Head of caudate nucleus (tissue), 42 donors: ENCODE measurements at regions of chr21 and their contacts with region 1.

Region 1: GRCh38 chr21:17387030-17387617 is 125.7 kb upstream of the CXADR start:
- DNase-seq: peak in 27 of 42 donors; percentile 14 to 87 (median 62)

Region 2: GRCh38 chr21:16342932-16343331 is 1044.2 kb before region 1 on chr21:
- intact Hi-C with region 1: no loop called
- DNase-seq: no peak

Region 3: DNA sequence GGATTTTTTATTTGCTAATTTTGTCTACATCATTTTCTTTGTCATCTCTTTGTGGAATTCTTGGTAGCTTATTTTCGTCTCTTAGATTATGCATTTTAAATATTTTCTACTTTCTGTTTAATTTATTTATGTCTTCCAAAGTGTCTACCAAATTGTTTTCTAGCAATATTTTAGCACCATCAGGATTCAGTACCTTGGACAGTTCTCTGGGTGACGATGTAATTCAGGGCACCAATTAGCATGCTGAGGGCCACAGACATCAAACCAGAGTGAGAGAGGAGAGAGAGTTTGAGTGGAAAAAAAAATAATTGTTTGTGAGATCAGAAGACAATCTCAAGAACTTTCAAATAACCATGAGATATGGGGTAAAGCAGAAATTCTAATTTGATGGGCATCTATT is 44.1 kb before region 1 on chr21:
- intact Hi-C with region 1: no loop called
- DNase-seq: no peak

Region 4: GRCh38 chr21:17441370-17441769 is 54.2 kb after region 1 on chr21:
- intact Hi-C with region 1: no loop called
- DNase-seq: peak in 12 of 42 donors; percentile 25 to 75 (median 48)

Region 5: DNA sequence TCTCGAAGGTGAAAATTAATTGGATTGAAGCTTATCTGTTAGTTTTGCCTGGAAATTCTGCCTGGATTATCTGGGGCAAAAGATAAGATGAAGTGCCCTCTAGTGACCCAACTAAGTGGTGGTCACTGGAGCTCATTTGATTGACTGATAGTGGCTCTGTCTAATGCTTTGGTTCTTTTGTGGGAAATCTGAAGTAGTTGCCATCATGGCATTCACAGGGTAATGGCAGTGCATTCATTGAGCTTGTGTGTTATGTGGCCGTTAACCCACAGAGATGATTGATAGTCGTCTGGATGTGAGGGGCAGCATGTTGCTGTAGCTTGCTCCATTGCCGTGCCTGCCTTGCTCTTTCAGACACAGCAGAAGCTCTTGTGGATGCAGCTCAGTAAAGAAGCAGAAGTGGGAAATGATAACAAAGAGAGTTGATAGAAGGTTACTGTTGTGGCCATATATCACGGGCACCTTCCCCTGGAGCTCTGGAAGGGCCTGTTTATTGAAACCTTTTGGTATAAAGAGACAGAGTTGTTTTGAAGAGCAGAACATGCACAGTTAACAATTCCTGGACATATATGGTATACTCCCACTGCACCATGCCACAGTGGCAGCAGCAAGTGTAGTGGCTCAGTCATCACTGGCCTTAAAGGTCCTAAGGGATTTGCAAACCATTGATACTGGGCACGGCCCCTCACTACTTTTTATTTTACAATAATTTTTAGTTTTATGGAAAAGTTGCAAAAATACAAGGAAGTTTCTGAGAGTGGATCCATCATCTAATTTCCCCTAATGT is 167.7 kb after region 1 on chr21:
- intact Hi-C with region 1: loop called (anchors 2 kb)
- DNase-seq: peak in 16 of 42 donors; percentile 20 to 72 (median 34)

Region 6: GRCh38 chr21:17585875-17586450 is 198.8 kb after region 1 on chr21:
- intact Hi-C with region 1: loop called (anchors 10 kb)
- DNase-seq: peak in 10 of 42 donors; percentile 22 to 66 (median 33)